Activated CD4-positive, alpha-beta memory T cell treated with anti-CD3 and anti-CD28 coated beads for 36 hours (primary cell): ENCODE measurements at regions of chr1 and their contacts with region 1.

Region 1: GRCh38 chr1:155934097-155934935 is at the start of gene KHDC4:
- DNase-seq: peak; percentile 97
- H3K4me3 Mint-ChIP-seq: no peak within 1 kb of the TSS
- H3K27ac Mint-ChIP-seq: no peak within 1 kb of the TSS
- H3K4me1 Mint-ChIP-seq: peaks cover 42% of the 10 kb centered on the region
- H3K27me3 Mint-ChIP-seq: no peaks in the 10 kb centered on the region
- total RNA-seq, gene KHDC4: 66.1 to 70.2 TPM

Region 2: DNA sequence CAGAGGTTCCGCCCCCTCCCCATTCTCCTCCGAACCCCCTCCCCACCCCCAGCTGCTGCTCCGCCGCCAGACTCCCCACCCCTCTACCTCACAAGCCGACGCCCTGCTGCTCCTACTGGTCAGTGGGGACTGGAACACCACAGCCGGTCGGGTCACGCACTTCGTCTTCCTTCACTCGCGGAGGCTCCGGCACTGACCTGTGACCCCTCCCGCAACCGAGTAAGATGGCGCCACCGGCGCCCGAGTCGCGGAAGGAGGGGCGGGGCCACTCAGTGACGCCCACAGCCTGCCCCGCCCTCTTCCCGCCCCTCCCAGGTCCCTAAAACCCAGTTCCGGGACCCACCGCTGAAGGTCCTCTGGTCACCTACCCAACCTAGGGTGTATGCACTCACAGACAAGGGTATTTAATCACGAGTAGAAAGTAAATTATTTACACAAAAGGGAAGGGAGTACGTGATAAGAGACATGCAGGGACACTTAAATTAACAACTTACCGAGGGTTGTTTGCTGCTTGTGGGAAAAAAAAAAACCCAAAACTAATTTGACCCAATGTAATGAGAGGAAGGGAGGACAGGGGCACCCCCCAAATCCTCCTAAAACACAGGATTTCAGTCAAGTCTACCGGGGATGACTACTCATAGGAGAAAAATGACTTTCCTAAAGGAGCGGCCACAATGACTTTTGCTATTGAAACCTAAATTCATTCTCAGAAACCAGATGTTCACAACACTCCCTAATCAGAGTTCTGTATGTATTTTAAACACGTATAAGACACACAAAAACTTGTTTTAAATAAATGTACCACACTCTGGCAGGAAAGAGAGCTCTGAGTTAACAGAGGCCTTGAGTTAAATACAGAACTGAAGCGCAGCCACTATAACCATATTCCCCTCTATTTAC is 22.9 kb before region 1 on chr1 and contains the start of gene RIT1:
- CTCF ChIA-PET with region 1: no interaction called
- POLR2A ChIA-PET with region 1: interaction called, 4 read pairs
- intact Hi-C with region 1: loop called (anchors 2 kb)
- DNase-seq: peak; percentile 90
- H3K4me3 Mint-ChIP-seq: peak within 1 kb of the TSS; percentile 97
- H3K27ac Mint-ChIP-seq: peak within 1 kb of the TSS; percentile 96
- H3K4me1 Mint-ChIP-seq: peaks cover 22% of the 10 kb centered on the region
- H3K27me3 Mint-ChIP-seq: no peaks in the 10 kb centered on the region
- total RNA-seq, gene RIT1: 19.1 to 21.1 TPM

Region 3: GRCh38 chr1:155978325-155978972 is 44.1 kb after region 1 on chr1 and contains the start of gene ARHGEF2:
- CTCF ChIA-PET with region 1: interaction called, 77 read pairs
- POLR2A ChIA-PET with region 1: interaction called, 32 read pairs
- intact Hi-C with region 1: loop called (anchors 1 kb)
- DNase-seq: peak; percentile 88
- H3K4me3 Mint-ChIP-seq: peak within 1 kb of the TSS; percentile 96
- H3K27ac Mint-ChIP-seq: peak within 1 kb of the TSS; percentile 96
- H3K4me1 Mint-ChIP-seq: peaks cover 66% of the 10 kb centered on the region
- H3K27me3 Mint-ChIP-seq: no peaks in the 10 kb centered on the region
- total RNA-seq, gene ARHGEF2: 165 to 174 TPM

Region 4: DNA sequence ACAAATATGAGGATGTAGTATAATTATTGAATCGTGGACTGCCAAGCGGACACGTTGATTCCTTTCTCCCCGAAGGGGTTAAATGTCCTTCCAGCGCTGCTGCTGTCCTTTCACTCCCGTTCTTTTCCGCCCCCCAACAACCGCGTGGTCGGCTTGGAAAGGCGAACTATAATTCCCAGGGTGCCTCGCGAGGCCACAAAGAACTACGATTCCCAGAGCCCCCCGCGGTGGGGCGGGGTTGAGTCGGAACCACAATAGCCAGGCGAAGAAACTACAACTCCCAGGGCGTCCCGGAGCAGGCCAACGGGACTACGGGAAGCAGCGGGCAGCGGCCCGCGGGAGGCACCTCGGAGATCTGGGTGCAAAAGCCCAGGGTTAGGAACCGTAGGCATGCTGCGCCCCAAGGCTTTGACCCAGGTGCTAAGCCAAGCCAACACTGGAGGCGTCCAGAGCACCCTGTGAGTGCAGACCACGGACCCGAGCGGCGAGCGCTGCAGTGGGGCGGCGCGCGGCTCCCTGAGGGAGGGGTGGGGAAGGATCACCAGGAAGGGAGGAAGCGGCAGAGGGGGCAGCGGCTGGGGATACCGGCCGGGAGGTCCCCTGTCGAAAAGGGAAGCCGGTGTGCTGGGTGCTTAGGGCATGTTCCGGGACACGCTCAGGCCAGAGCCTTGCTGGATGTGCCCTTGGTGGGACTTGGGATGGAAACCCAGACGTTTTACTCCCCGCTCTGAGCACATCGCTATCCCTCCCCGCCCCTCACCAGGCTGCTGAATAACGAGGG is 120.4 kb after region 1 on chr1 and contains the start of gene LAMTOR2:
- CTCF ChIA-PET with region 1: no interaction called
- POLR2A ChIA-PET with region 1: no interaction called
- intact Hi-C with region 1: loop called (anchors 2 kb)
- DNase-seq: peak; percentile 98
- H3K4me3 Mint-ChIP-seq: peak within 1 kb of the TSS; percentile 93
- H3K27ac Mint-ChIP-seq: peak within 1 kb of the TSS; percentile 96
- H3K4me1 Mint-ChIP-seq: peaks cover 27% of the 10 kb centered on the region
- H3K27me3 Mint-ChIP-seq: no peaks in the 10 kb centered on the region
- total RNA-seq, gene LAMTOR2: 61.4 to 65.1 TPM

Region 5: GRCh38 chr1:156338180-156338973 is 404.1 kb after region 1 on chr1 and contains the starts of genes CCT3 and TSACC:
- CTCF ChIA-PET with region 1: interaction called, 3 read pairs
- POLR2A ChIA-PET with region 1: no interaction called
- intact Hi-C with region 1: loop called (anchors 5 kb)
- DNase-seq: peak; percentile 99
- H3K4me3 Mint-ChIP-seq: peak within 1 kb of the TSS; percentile 90
- H3K27ac Mint-ChIP-seq: peak within 1 kb of the TSS; percentile 95
- H3K4me1 Mint-ChIP-seq: peaks cover 27% of the 10 kb centered on the region
- H3K27me3 Mint-ChIP-seq: no peaks in the 10 kb centered on the region
- total RNA-seq, gene CCT3: 344 to 356 TPM
- total RNA-seq, gene TSACC: not detected